Breast epithelium (tissue), 4 donors: ENCODE measurements at regions of chr19 and their contacts with region 1.

Region 1: DNA sequence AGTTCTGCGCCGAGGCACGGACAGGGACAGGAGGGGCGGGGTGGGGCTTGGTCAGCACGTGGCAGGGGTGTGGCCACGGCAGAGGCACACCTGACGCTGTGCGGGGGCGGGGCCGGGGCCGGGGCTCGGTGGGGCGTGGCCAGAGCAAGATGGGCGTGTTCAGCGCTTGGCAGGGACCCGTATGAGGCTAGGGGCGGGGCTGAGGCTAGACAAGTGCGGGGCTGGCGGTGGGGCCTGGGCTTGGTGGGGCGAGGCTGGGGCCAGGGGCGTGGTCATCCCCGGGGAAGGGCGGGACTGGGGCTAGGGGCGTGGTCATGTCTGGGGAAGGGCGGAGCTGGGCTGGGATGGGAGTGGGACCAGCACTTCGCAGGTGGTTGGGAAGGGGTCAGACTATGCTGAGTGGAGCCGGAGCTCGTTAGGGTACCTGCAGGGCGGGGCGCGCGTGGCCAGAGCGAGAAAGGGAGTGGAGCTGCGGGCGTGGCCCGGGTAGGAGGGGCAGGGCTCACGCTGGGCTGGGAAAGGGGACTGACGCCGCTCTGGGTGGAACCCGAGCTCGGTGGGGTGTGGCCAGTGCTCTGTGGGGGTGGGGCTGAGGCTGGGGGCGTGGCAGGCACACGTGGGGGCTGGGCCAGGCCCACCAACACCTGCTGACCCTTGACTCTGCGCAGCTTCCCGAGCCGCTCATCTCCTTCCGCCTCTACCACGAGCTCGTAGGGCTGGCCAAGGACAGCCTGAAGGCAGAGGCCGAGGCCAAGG is 12.8 kb downstream of the POLR2E start:
- DNase-seq: peak; percentile 91 to 93
- H3K4me3 ChIP-seq: peak overlapping the region in 2 of 3 donors; percentile 51 to 67
- H3K27ac ChIP-seq: peak overlapping the region; percentile 23 to 45
- H3K4me1 ChIP-seq: no peaks in the 10 kb centered on the region
- H3K27me3 ChIP-seq: no peaks in the 10 kb centered on the region
- CTCF ChIP-seq: no peak
- POLR2A ChIP-seq: no peak

Region 2: GRCh38 chr19:1039646-1040475 is 42.5 kb before region 1 on chr19 and contains the start of gene ABCA7:
- intact Hi-C with region 1: no loop called
- DNase-seq: peak; percentile 98 to 99
- H3K4me3 ChIP-seq: peak within 1 kb of the TSS; percentile 44 to 63 (median 62)
- H3K27ac ChIP-seq: peak within 1 kb of the TSS in 1 of 2 donors; percentile 59
- H3K4me1 ChIP-seq: peaks cover 0 to 13% of the 10 kb centered on the region in 2 donors
- H3K27me3 ChIP-seq: no peaks in the 10 kb centered on the region
- CTCF ChIP-seq: no peak
- POLR2A ChIP-seq: no peak
- total RNA-seq, gene ABCA7: 8.0 to 31.8 (median 26.5) TPM

Region 3: GRCh38 chr19:1113033-1113985 is 31.0 kb after region 1 on chr19:
- intact Hi-C with region 1: no loop called
- DNase-seq: peak; percentile 91 to 96
- H3K4me3 ChIP-seq: peak overlapping the region in 1 of 3 donors; percentile 40
- H3K27ac ChIP-seq: peak overlapping the region; percentile 85 to 92
- H3K4me1 ChIP-seq: peaks cover 17 to 18% of the 10 kb centered on the region in 2 donors
- H3K27me3 ChIP-seq: no peaks in the 10 kb centered on the region
- CTCF ChIP-seq: peak; percentile 78 to 96 (median 93)
- POLR2A ChIP-seq: no peak

Region 4: DNA sequence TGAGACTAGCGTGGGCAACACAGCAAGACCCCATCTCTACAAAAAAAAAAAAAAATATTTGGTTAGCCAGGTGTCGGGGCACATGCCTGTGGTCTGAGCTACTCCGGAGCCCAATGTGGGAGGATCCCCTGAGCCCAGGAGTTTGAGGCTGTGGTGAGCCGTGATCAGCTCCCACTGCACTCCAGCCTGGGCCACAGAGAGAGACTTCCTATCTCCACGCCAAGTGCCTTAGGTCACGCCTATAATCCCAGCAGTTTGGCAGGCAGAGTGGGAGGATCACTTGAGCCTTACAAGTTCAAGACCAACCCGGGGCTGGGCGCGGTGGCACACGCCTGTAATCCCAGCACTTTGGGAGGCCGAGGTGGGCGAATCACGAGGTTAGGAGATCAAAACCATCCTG is 814.2 kb after region 1 on chr19:
- intact Hi-C with region 1: loop called (anchors 5 kb)
- DNase-seq: no peak
- H3K4me3 ChIP-seq: no peak overlapping the region
- H3K27ac ChIP-seq: peak overlapping the region in 1 of 2 donors; percentile 48
- H3K4me1 ChIP-seq: no peaks in the 10 kb centered on the region
- H3K27me3 ChIP-seq: no peaks in the 10 kb centered on the region
- CTCF ChIP-seq: no peak
- POLR2A ChIP-seq: no peak